ENCODE measurements at regions of chr12 and their contacts with region 1.

Region 1: DNA sequence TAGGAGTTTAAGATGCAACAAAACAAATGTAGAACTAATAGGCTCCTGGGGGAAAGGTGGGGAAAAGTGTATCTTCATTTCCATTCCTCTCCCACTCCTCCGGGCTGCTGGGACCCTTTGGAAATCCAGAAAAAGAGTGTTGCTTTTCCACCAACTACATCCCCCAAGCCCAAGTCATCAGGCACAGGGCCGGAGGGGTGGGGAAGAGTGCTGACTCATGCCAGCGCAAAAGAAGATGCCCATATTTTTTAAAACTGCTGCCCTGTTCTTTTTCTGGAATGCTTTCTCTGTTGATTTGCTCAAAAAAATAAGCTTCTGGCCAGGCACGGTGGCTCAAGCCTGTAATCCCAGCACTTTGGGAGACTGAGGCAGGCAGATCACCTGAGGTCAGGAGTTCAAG is 70.9 kb downstream of the TBK1 start:
- DNase-seq: no peak
- ATAC-seq: no peak
- H3K4me3 Mint-ChIP-seq: no peak overlapping the region
- H3K27ac Mint-ChIP-seq: no peak overlapping the region
- H3K4me1 Mint-ChIP-seq: no peaks in the 10 kb centered on the region
- H3K27me3 Mint-ChIP-seq: peaks cover 6% of the 10 kb centered on the region

Region 2: GRCh38 chr12:64323476-64324225 is 199.2 kb before region 1 on chr12:
- CTCF ChIA-PET with region 1: no interaction called
- POLR2A ChIA-PET with region 1: no interaction called
- intact Hi-C with region 1: no loop called
- DNase-seq: no peak
- ATAC-seq: no peak
- H3K4me3 Mint-ChIP-seq: no peak overlapping the region
- H3K27ac Mint-ChIP-seq: no peak overlapping the region
- H3K4me1 Mint-ChIP-seq: no peaks in the 10 kb centered on the region
- H3K27me3 Mint-ChIP-seq: no peaks in the 10 kb centered on the region

Region 3: GRCh38 chr12:64412459-64412858 is 110.3 kb before region 1 on chr12:
- CTCF ChIA-PET with region 1: no interaction called
- POLR2A ChIA-PET with region 1: no interaction called
- intact Hi-C with region 1: no loop called
- DNase-seq: no peak
- ATAC-seq: no peak
- H3K4me3 Mint-ChIP-seq: no peak overlapping the region
- H3K27ac Mint-ChIP-seq: no peak overlapping the region
- H3K4me1 Mint-ChIP-seq: peaks cover 11% of the 10 kb centered on the region
- H3K27me3 Mint-ChIP-seq: no peaks in the 10 kb centered on the region

Region 4: GRCh38 chr12:64544371-64545080 is 21.7 kb after region 1 on chr12:
- CTCF ChIA-PET with region 1: interaction called, 4 read pairs
- POLR2A ChIA-PET with region 1: interaction called, 10 read pairs
- intact Hi-C with region 1: no loop called
- DNase-seq: no peak
- ATAC-seq: no peak
- H3K4me3 Mint-ChIP-seq: no peak overlapping the region
- H3K27ac Mint-ChIP-seq: no peak overlapping the region
- H3K4me1 Mint-ChIP-seq: peaks cover 3% of the 10 kb centered on the region
- H3K27me3 Mint-ChIP-seq: peaks cover 2% of the 10 kb centered on the region

Measured in activated CD4-positive, alpha-beta T cell treated with anti-CD3 and anti-CD28 coated beads for 36 hours (primary cell).